Dorsolateral prefrontal cortex (tissue), 120 donors: ENCODE measurements at regions of chr5 and their contacts with region 1.

Region 1: DNA sequence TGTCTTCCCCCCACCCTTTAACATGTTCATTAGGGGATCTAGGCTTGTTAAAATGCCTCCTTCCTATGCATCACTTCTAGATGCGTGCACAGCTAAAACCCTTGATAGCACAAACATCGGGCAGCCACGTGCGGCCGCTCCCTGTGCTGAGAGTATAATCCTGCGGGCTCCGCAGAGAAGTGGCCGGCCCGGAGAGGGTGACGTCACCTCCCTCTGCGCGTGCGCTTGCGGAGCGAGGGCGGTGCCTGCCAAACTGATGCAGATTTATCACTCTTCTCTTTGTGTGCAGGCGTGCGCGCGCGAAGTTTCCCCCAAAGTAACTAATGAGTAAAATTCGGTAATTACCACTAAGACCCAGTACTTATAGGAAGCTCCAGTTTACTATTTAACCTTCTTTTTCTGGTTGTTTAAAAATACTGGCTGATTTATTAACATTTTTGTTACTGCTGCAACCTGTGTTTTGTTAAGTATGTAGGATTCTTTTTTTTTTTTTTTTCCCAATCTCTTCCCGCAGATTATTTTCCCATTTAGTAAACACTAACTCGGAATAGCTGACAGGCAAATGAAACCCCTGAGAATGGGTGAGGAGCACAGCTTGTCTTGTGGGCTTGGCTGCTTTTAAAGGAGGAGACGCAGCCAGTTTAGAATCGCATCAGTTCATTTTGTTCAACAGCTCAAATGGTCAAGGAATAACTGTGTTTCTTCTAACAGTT is 121.6 kb downstream of the TRIO start:
- DNase-seq: peak; percentile 84 to 94 (median 92)
- H3K4me3 ChIP-seq: peak overlapping the region in 58 of 59 donors; percentile 1 to 64 (median 46)
- H3K27ac ChIP-seq: peak overlapping the region in 25 of 59 donors; percentile 4 to 80 (median 26)
- H3K27me3 ChIP-seq: peaks cover 0 to 4% (median 0%) of the 10 kb centered on the region in 45 donors
- CTCF ChIP-seq: peak in 19 of 56 donors; percentile 1 to 48 (median 28)

Region 2: DNA sequence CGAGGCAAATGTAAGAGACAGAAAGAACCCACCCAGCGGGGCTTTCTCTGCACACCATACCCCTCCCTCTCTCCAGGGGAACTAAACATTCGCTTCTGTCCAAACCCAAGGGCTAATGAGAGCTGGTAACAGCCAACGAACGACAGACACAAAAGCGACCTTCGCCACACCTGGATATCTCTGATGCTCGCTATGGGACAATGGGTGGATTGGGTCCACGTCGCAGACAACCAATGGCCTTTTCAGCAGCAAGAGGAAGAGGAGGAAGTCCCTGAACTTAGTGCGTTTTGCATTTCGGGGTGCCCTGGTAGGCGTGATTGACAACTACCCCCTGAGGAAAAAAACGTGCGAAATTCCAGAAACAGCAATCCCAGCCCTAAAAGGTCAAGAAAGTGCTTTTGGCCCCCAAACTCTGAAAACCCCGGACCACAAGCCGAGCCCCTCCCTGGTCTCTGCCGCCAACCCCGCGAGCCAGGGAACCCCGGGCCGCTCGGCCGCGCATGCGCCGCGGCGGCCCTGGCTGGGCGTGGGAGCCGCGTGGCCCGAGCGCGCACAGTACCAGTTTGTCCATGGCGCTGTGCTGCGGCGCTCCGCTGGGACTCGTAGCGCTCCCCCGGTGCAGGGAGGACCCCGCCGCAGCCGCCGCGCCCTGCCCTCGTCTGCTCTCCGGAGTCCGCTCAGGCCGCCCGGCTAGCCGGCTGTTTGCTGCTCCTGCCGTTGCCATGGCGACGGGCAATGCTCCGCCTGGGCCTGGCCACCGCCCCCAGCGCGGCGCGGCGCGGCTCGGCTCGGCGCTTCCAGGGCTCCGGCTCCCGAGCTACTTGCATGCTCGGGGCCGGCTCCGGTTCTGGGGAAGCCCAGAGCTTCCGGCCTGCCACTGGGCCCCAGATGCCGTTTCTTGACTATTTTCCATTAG is 253.4 kb before region 1 on chr5:
- intact Hi-C with region 1: loop called in 1 of 2 experiments (anchors 10 kb)
- DNase-seq: peak; percentile 56 to 88 (median 81)
- H3K4me3 ChIP-seq: peak overlapping the region; percentile 37 to 76 (median 65)
- H3K27ac ChIP-seq: peak overlapping the region in 49 of 59 donors; percentile 0 to 84 (median 59)
- H3K27me3 ChIP-seq: no peaks in the 10 kb centered on the region
- CTCF ChIP-seq: peak in 36 of 56 donors; percentile 6 to 55 (median 30)

Region 3: DNA sequence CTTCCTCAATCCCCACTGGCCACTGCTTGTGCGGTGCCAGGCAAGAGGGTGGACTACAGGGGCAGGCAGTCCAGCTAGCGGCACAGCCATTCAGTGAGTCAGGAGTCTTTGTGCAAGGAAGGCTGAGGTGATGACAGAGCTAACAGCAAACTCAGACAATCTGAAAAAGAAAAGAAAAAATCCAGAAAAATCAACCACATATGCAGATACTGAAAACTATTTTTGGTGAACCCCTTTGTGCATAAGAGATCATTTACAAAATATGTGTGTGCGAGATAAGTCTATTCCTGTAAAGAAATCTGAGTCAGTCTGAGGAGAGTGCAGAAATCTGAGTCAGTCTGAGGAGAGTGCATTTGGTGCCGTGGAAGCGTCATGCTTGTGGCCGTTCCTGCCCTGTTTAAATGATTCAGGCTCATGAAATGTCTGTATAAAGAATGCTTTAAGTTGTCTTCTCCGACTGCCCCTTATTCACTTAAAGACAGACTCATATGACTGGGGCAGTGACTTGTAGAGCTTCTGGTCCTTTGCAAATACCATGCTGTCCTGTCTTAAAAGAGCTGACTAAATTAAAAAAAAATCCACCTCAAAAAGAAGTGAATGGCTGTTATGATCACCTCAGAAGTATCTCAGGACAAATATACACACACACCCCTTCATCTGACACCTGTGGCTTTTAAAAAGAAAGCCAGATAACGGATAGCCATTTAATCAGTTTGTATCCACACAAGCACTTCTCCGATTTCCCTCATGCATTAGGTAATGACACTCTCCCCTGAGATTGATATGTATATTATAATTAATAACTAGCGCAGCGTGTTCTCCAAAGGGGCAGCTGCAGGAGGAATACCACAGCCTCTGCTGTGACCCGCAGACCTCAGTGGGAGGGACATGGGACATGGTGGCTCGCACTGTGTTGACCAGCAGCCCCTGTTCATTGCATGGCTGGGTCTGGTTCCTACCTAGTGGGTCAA is 74.3 kb before region 1 on chr5:
- intact Hi-C with region 1: no loop called
- DNase-seq: peak in 6 of 10 donors; percentile 48 to 67 (median 61)
- H3K4me3 ChIP-seq: peak overlapping the region in 6 of 59 donors; percentile 1 to 20 (median 4)
- H3K27ac ChIP-seq: peak overlapping the region in 43 of 59 donors; percentile 1 to 82 (median 58)
- H3K27me3 ChIP-seq: no peaks in the 10 kb centered on the region
- CTCF ChIP-seq: no peak

Region 4: DNA sequence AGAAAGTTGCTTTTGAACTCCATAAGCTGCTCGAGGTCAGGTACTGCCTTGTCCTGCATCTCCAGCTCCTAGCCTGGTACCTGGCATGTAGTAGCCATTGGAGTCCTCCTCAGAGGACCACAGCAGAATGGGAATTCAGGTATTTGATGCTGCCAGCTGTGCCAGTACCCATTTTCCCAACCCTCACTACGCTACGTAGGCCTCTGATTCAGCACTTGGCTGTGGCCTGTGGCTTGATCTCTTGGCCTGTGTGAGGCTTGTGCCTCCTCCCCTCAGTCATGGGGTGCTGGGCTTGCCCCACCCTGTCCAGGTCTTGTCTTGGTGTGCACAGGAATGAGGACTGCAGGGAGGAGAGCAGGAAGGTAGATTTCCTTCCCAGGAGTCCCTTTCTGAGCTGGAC is 411.6 kb after region 1 on chr5:
- intact Hi-C with region 1: no loop called
- DNase-seq: no peak
- H3K4me3 ChIP-seq: no peak overlapping the region
- H3K27ac ChIP-seq: no peak overlapping the region
- H3K27me3 ChIP-seq: no peaks in the 10 kb centered on the region
- CTCF ChIP-seq: no peak